ENCODE measurements at regions of chr13 and their contacts with region 1.

Region 1: GRCh38 chr13:51452361-51453206 is at the start of gene INTS6:
- DNase-seq: peak; percentile 99
- H3K4me3 Mint-ChIP-seq: peak within 1 kb of the TSS; percentile 80
- H3K27ac Mint-ChIP-seq: peak within 1 kb of the TSS; percentile 94
- H3K4me1 Mint-ChIP-seq: peaks cover 24% of the 10 kb centered on the region
- H3K27me3 Mint-ChIP-seq: no peaks in the 10 kb centered on the region
- CTCF ChIP-seq: no peak
- total RNA-seq, gene INTS6: 74.2 and 78.5 TPM in 2 replicates

Region 2: DNA sequence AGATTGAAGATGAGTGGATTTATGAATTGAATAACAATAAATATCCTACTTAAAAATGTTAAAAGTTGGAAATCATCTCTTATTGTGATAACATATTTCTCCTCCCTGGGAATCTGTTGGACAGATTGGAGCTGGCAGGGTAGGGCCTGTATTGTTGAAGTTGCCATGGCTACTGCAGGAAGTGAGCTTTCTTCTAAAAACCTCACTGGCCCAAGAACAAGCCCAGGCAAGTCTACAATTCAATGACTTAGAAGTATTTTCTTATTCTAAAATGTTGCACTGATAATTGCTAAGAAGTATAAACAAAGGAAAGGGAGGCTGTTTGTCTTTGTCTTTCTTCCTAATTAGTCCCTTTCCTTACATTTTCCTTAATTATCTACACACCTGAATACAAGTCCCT is 721.2 kb before region 1 on chr13:
- CTCF ChIA-PET with region 1: no interaction called
- POLR2A ChIA-PET with region 1: no interaction called
- intact Hi-C with region 1: no loop called
- DNase-seq: peak; percentile 86
- H3K4me3 Mint-ChIP-seq: peak overlapping the region; percentile 38
- H3K27ac Mint-ChIP-seq: peak overlapping the region; percentile 96
- H3K4me1 Mint-ChIP-seq: peaks cover 21% of the 10 kb centered on the region
- H3K27me3 Mint-ChIP-seq: no peaks in the 10 kb centered on the region
- CTCF ChIP-seq: no peak

Region 3: DNA sequence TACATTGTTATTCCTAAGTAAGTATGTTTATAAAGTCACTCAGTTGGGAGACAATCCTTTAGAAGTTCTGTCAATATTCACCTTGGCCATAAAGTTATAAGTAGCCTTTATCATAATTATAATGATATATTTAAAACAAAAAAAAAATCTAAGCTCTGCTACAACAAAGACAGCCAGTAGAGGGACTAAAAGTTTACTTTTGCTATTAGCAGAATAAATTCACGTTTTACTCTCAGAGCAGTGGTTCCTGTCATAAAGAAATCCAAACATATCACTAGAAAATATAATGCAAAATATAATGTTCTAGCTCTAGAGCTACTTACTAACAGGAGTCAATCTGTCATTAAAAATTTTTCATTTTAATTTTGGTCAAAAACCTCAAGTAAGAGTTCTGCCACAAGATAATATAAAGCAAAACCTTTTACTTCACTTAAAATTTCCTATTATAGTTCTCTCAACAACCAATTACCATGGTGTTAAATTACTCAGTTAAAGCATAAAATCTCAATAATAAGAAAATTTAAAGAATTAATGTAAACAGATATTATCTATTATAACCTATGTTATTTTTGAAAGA is 17.5 kb before region 1 on chr13:
- CTCF ChIA-PET with region 1: interaction called, 4 read pairs
- POLR2A ChIA-PET with region 1: interaction called, 111 read pairs
- intact Hi-C with region 1: no loop called
- DNase-seq: peak; percentile 17
- H3K4me3 Mint-ChIP-seq: no peak overlapping the region
- H3K27ac Mint-ChIP-seq: no peak overlapping the region
- H3K4me1 Mint-ChIP-seq: no peaks in the 10 kb centered on the region
- H3K27me3 Mint-ChIP-seq: no peaks in the 10 kb centered on the region
- CTCF ChIP-seq: peak; percentile 43

Region 4: GRCh38 chr13:51523082-51523518 is 70.5 kb after region 1 on chr13:
- CTCF ChIA-PET with region 1: no interaction called
- POLR2A ChIA-PET with region 1: interaction called, 95 read pairs
- intact Hi-C with region 1: loop called (anchors 1 kb)
- DNase-seq: peak; percentile 96
- H3K4me3 Mint-ChIP-seq: peak overlapping the region; percentile 25
- H3K27ac Mint-ChIP-seq: no peak overlapping the region
- H3K4me1 Mint-ChIP-seq: peaks cover 25% of the 10 kb centered on the region
- H3K27me3 Mint-ChIP-seq: no peaks in the 10 kb centered on the region
- CTCF ChIP-seq: no peak

Region 5: DNA sequence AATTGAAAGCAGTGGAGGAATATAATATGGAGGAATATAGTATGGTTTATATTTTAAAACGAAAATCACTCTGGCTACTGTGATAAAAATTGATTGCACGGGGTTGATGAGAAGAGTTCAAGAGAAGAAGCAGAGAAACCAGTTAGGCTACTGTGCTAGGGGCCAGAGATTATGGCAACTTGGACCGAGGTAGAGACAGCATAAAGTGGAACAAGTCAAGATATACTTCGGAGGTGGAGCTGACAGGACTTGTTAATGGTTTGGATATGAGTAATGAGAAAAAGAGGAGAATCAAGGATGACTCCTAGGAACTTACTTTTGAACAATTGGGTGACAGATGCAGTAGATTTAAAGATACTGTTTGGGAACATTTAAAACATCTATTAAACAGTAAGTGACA is 125.1 kb after region 1 on chr13:
- CTCF ChIA-PET with region 1: interaction called, 3 read pairs
- POLR2A ChIA-PET with region 1: interaction called, 25 read pairs
- intact Hi-C with region 1: no loop called
- DNase-seq: no peak
- H3K4me3 Mint-ChIP-seq: peak overlapping the region; percentile 37
- H3K27ac Mint-ChIP-seq: peak overlapping the region; percentile 20
- H3K4me1 Mint-ChIP-seq: peaks cover 46% of the 10 kb centered on the region
- H3K27me3 Mint-ChIP-seq: no peaks in the 10 kb centered on the region
- CTCF ChIP-seq: no peak

Region 6: GRCh38 chr13:51625555-51626345 is 173.2 kb after region 1 on chr13:
- CTCF ChIA-PET with region 1: no interaction called
- POLR2A ChIA-PET with region 1: interaction called, 44 read pairs
- intact Hi-C with region 1: no loop called
- DNase-seq: peak; percentile 83
- H3K4me3 Mint-ChIP-seq: no peak overlapping the region
- H3K27ac Mint-ChIP-seq: peak overlapping the region; percentile 63
- H3K4me1 Mint-ChIP-seq: peaks cover 54% of the 10 kb centered on the region
- H3K27me3 Mint-ChIP-seq: no peaks in the 10 kb centered on the region
- CTCF ChIP-seq: no peak

Region 7: GRCh38 chr13:51729866-51730546 is 277.4 kb after region 1 on chr13:
- CTCF ChIA-PET with region 1: interaction called, 3 read pairs
- POLR2A ChIA-PET with region 1: interaction called, 28 read pairs
- intact Hi-C with region 1: loop called (anchors 5 kb)
- DNase-seq: peak; percentile 75
- H3K4me3 Mint-ChIP-seq: no peak overlapping the region
- H3K27ac Mint-ChIP-seq: no peak overlapping the region
- H3K4me1 Mint-ChIP-seq: peaks cover 23% of the 10 kb centered on the region
- H3K27me3 Mint-ChIP-seq: no peaks in the 10 kb centered on the region
- CTCF ChIP-seq: no peak

Measured in MCF 10A (cell line).